Left ventricle myocardium superior (tissue), 1 donor: ENCODE measurements at regions of chr11 and their contacts with region 1.

Region 1: DNA sequence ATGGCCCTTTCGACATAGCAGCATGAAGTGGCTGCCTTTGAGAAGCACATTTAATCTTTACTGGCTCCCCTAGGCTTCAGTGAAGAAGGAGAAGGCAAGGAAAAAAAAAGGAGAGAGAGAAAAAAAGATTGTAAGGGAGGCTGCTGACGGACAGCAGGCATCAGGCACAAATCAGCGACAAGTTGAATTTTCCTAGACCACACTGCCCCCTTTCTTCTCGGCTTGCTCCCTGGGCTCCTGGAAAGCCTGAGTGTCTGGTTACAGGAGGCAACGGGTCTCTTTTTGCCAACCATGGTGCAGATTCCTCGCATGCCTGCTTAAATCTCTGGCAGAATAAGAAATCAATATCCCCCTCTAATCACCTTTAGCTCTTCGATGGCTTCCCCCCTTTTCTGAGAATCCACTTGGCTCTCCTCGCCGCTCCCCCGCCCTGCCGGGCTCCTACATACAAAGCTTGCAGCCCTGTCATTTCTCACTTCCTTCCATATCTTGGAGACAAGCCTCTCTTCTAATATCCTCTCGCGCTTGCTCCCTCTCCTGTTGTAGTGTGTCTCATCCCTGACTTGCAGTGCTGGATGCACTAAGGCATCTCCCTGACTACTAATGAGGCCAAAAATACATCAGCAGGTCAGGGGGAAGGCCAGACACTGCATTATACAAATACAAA is 14.3 kb downstream of the BLID start:
- DNase-seq: peak; percentile 65
- ATAC-seq: peak; percentile 91

Region 2: GRCh38 chr11:122032317-122032716 is 69.4 kb before region 1 on chr11:
- intact Hi-C with region 1: loop called (anchors 5 kb)
- DNase-seq: no peak
- ATAC-seq: peak; percentile 81